ENCODE measurements at regions of chr3 and their contacts with region 1.

Region 1: GRCh38 chr3:11335056-11335608 is 62.9 kb downstream of the ATG7 start:
- DNase-seq: peak; percentile 48
- H3K4me3 ChIP-seq: no peak overlapping the region
- H3K27ac ChIP-seq: no peak overlapping the region
- H3K4me1 ChIP-seq: no peaks in the 10 kb centered on the region
- CTCF ChIP-seq: peak; percentile 77

Region 2: DNA sequence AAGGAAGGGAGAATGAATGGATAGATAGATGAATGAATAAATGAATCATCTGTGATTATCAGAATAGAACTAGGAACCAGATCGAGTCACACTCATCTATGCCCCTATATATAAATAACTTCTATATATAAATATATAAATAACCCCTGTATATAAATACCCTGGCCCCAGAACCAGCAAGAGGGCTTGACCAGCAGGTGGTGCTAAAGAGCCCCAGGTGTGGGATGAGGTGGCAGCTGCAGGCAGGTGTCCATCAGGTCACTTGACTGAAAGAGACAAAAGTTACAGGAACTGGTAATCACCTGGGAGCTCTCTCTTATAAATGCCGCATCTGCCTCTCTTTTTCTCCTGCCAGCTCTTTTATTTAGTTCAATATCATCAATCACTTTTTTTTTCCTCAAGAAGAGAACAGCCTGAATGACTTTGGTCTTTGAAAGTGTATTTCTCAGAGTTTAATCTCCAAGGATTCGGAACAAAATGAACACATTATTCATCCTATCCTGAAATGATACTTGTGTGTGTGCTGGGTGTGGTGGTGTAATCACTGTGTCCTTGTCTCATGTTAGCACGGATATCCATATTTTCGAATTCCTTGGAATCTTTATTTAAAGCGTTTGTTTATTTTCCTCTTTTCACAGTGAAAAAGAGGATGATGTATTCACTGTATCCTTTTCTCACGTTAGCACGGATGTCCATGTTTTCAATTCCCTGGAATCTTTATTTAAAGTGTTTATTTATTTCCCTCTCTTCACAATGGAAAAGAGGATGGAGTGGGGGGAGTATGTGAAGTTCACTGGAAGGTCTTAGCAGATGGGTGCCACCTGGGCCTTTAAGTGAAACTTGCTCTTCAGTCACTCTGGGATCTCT is 98.3 kb before region 1 on chr3:
- CTCF ChIA-PET with region 1: interaction called, 3 read pairs
- POLR2A ChIA-PET with region 1: interaction called, 3 read pairs
- intact Hi-C with region 1: loop called (anchors 1 kb)
- DNase-seq: peak; percentile 70
- H3K4me3 ChIP-seq: no peak overlapping the region
- H3K27ac ChIP-seq: no peak overlapping the region
- H3K4me1 ChIP-seq: no peaks in the 10 kb centered on the region
- CTCF ChIP-seq: peak; percentile 86

Region 3: DNA sequence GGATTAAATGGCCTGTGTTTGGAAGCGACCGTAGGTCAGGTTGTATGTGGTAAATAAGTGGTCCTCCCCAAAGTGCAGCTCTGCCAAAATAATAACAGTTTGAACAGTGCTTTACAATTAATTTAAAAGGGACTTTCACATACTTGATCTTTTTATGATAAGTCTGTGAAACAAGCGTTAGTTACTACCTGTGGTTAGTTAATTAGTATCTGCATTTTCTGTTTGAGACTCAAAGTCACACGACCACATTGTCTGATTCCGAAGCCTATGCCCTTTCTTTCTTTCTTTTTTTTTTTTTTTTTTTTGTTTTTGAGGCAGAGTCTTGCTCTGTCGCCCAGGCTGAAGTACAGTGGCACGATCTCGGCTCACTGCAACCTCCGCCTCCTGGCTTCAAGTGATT is 17.8 kb before region 1 on chr3:
- CTCF ChIA-PET with region 1: no interaction called
- POLR2A ChIA-PET with region 1: no interaction called
- intact Hi-C with region 1: no loop called
- DNase-seq: no peak
- H3K4me3 ChIP-seq: no peak overlapping the region
- H3K27ac ChIP-seq: no peak overlapping the region
- H3K4me1 ChIP-seq: no peaks in the 10 kb centered on the region
- CTCF ChIP-seq: no peak

Measured in OCI-LY7 (cell line).